Gastrocnemius medialis (tissue), 4 donors: ENCODE measurements at regions of chr2 and their contacts with region 1.

Region 1: DNA sequence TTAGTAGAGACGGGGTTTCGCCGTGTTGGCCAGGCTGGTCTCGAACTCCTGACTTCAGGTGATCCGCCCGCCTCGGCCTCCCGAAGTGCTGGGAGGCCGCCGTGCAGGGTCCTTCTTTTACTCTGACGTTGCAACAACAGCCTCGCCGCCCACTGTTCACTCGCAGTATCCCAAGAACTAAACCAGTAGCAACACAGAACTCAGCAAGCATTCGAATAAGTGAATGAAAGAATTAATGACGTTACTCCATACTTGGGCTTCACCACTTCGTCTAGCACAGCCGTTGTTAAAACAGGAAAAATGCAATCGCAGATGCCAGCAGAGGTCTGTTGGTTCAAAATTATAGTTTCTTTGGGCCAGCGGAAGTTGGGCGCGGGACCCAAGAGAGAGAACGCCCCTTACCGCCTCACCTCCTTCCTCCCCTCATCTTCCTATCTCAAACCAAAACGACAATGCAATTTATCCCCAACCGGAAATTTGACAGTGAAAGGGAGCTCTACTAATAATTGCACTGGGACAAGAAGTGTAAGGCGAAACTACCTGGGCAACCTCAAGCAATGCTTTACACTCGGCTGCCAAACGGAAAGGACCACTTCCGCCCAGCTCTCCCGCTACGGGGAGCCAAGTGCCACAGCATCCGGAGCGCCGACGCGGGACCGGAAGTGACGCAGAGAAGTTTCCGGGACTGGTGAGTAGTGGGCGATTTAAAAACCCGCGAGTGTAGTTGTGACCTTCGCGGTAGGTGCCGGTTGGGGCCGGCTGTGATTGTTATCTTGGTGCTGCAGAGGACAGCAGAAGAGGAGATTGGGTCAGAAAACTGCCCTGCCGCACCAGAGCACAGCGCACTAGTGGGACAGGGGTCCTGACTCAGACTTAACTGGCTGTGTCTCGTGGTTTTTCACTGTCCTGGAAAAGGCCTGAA is at the starts of genes NIF3L1 and PPIL3:
- DNase-seq: peak; percentile 90 to 93
- ATAC-seq: peak; percentile 95 to 97
- H3K4me3 ChIP-seq: peak within 1 kb of the TSS; percentile 60 to 91 (median 74)
- H3K27ac ChIP-seq: peak within 1 kb of the TSS; percentile 90 to 94 (median 94)
- H3K4me1 ChIP-seq: peaks cover 13 to 22% of the 10 kb centered on the region in 2 donors
- H3K27me3 ChIP-seq: no peaks in the 10 kb centered on the region
- CTCF ChIP-seq: no peak
- POLR2A ChIP-seq: peak; percentile 50 to 57
- total RNA-seq, gene NIF3L1: 17.0 to 28.7 (median 22.4) TPM
- total RNA-seq, gene PPIL3: 8.4 to 29.2 (median 14.3) TPM

Region 2: DNA sequence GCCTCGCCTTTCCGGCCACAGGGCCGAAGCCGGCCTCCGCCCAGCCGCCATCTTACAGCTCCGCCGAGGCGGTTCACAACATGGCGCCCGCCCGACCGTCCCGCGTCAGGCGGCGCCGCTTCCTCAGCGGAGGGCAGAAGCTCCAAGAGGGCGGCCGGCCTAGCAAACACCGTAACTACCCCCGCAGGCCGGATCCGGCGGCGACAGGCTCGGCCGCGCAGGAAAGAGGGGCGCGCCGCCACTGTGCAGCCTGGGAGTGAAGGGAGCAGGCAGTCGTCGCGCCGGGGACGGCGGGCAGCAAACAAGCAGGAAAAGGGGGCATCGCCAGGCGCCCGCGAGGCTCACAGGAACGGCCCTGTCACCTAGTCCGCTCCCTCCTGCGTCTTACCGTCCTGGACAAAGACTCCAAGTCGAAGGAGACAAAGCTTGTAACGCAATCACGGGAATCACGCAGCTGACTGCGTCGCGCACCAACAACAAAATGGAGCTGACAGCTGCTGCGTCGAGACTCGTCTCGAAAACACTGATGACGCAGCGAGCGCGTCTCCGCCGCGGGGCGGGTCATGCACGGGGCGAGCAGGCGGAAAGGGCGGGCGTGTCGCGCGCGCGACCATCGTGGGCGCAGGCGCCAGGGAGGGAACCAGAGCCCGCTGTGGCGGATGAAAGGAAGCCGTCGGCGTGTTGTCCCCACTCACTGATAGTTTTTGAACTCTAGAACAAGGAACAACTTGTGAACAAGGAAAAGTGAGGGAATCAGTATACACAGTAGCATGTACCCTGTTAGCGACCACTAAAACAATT is 24.6 kb before region 1 on chr2 and contains the start of gene CLK1:
- in situ Hi-C with region 1: no loop called
- intact Hi-C with region 1: loop called (anchors 2 kb)
- DNase-seq: peak; percentile 94 to 96
- ATAC-seq: peak; percentile 81 to 83
- H3K4me3 ChIP-seq: peak within 1 kb of the TSS; percentile 97 to 99 (median 98)
- H3K27ac ChIP-seq: peak within 1 kb of the TSS; percentile 100
- H3K4me1 ChIP-seq: peaks cover 28 to 34% of the 10 kb centered on the region in 2 donors
- H3K27me3 ChIP-seq: no peaks in the 10 kb centered on the region
- CTCF ChIP-seq: peak in 1 of 5 experiments; percentile 18
- POLR2A ChIP-seq: peak; percentile 99
- total RNA-seq, gene CLK1: 61.6 to 104 (median 85.3) TPM

Region 3: DNA sequence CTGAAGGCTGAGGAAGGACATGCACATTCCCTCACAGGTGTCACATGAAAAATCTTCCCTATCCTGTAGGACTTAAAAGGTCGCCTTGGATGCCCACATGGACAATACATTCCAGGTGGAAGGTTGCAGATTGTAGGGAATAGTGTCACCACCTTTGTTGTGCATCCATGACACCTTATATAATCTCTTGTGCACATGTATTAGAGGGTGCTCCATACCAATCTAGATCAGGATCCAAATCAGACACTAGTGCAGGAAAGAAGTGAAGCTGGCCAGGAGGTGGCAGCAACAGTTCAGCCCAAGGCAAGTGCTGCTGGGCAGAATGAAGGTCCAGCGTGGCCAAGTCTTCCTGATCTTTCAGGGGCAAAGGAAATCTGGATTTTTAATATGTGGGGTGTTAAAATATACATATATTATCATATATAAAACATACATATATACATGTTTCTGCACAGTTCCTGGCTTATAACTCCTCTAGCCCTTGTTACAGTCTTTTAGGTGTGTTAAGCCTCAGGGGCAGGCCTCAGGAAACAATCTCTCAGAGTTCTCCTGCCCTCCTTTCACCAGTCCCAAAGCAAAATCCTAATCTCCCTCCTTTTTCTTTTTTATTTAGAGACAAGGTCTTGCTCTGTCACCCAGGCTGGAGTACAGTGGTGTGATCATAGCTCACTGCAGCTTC is 16.8 kb after region 1 on chr2:
- in situ Hi-C with region 1: no loop called
- intact Hi-C with region 1: no loop called
- DNase-seq: peak; percentile 27 to 57
- ATAC-seq: peak; percentile 45 to 85
- H3K4me3 ChIP-seq: no peak overlapping the region
- H3K27ac ChIP-seq: peak overlapping the region in 2 of 4 donors; percentile 11 to 20
- H3K4me1 ChIP-seq: peaks cover 0 to 10% of the 10 kb centered on the region in 2 donors
- H3K27me3 ChIP-seq: no peaks in the 10 kb centered on the region
- CTCF ChIP-seq: peak; percentile 28 to 70 (median 54)
- POLR2A ChIP-seq: no peak